ENCODE measurements at regions of chr20 and their contacts with region 1.

Region 1: DNA sequence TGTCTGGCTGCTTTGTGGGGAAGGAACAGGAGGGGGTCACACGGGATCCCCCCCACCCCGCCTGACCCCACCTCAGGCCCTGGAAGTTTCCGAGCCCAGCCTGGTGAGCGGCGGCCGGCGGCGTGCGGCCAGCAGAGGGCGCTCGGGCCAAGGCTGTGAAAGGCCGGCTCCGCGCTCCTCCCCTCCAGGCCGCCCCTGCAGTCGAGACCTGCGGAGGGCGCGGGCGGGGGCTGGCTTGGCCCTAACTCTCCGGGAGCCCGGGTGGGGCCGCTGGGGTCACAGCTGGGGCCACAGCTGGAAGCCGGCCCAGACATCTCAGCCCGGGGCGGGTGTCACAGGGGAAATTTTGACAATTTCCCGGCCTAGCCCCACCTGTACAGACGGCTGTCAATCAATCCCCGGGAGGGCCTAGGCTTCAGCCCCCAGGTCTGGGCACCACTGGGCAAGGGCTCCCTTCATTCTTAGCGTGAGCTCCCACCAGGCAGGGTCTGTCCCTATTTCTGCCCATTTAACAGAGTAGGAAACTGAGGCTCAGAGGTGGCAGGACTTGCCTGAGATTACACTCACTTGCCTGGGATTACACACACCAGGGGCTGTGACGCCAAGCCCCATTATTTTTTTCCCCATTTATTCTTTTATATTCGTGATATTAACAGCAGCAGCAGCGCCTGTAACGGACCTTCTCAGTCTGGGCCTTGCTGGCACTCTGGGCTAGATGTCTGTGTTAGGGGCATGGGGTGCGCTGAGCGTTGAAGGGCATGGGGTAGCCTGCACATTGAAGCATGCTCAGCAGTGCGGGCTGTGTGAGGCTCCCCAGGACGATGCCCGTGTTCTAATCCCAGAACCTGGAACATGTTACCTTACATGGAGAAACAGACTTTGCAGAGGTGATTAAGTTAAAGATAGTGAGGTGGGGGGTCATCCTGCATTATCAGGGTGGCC is 23.0 kb downstream of the ZBP1 start:
- DNase-seq: peak; percentile 59
- H3K4me3 Mint-ChIP-seq: no peak overlapping the region
- H3K27ac Mint-ChIP-seq: no peak overlapping the region
- H3K4me1 Mint-ChIP-seq: peaks cover 9% of the 10 kb centered on the region
- H3K27me3 Mint-ChIP-seq: peaks cover 33% of the 10 kb centered on the region

Region 2: DNA sequence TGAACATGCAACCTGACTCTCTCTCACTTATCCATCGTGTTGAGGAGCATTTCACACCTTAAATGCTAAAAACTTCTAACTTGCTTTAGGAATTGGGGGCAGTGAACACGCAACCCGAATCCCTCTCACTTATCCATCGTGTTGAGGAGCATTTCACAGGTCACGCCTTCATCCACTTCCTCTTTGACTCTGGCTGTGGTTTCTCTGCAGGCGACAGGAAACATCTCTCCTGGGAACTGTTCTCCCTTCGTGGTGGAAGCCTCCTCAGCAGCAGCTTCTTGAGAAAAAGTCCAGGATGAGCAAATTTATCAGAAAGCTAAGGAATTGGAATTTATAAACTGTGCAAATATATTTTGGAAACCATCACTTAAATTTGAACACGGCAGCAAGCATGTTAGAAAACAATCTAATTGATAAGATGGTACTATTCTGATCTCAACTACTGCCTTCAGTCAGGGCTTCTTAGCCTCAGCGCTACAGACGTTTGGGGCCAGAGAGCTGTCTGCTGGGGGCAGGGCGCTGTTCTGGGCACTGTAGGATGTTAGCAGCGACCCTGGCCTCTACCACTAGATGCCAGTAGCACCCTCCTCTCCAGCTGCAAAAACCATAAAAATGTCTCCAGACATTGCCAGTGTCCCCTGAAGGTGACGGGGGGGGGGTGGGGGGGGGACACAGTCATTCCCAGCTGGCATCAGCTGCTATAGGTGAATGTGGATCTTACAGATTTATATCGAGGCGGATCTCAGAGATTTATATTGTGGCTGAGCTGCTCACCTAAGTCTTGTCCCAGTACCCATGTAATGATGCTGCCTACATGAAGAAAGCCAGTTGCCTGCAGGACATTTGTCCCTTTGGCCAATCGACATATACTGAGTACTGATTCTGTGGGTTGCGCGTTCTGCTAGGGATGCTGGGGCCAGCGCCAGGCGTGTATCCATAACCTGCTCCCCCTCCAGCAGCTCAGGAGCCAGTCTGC is 98.6 kb before region 1 on chr20:
- intact Hi-C with region 1: loop called (anchors 1 kb)
- DNase-seq: no peak
- H3K4me3 Mint-ChIP-seq: no peak overlapping the region
- H3K27ac Mint-ChIP-seq: no peak overlapping the region
- H3K4me1 Mint-ChIP-seq: peaks cover 13% of the 10 kb centered on the region
- H3K27me3 Mint-ChIP-seq: peaks cover 39% of the 10 kb centered on the region

Region 3: DNA sequence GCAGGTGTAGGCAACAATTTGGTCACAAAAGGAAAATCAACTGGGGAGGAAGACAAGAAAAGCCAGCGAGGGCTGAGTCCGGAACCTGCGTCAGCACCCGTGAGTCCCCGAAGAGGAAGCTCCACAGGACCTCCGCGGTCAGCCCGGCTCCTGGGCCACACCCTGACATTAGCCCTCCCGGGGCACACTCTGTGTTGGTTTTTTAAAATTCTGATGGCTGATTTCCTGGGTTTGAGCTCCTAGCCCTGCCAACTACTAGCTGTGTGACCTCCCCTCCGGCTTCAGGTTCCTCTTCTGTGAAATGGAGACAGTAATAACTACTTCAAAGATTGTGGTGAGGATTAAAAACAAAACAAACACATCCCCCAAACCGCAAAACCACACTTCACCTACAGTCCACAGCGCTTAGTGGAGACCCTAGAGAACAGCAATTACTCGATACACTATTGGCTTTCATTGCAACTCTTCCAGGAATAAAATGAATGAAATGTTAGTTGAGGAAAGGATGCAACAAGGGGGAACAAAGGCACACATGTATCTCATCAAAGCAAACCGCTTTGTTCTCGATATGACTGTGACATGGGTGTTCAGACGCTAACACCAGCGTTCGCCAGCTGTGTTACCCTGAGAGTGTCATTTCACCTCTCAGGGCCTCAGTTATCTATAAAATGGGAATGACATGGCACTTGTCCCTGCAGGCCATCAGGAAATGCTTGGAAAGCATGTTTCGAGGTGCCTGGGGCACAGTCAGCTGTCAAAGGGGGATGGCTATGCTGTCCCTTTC is 22.0 kb after region 1 on chr20:
- intact Hi-C with region 1: no loop called
- DNase-seq: peak; percentile 71
- H3K4me3 Mint-ChIP-seq: peak overlapping the region; percentile 72
- H3K27ac Mint-ChIP-seq: peak overlapping the region; percentile 86
- H3K4me1 Mint-ChIP-seq: peaks cover 51% of the 10 kb centered on the region
- H3K27me3 Mint-ChIP-seq: peaks cover 17% of the 10 kb centered on the region

Region 4: DNA sequence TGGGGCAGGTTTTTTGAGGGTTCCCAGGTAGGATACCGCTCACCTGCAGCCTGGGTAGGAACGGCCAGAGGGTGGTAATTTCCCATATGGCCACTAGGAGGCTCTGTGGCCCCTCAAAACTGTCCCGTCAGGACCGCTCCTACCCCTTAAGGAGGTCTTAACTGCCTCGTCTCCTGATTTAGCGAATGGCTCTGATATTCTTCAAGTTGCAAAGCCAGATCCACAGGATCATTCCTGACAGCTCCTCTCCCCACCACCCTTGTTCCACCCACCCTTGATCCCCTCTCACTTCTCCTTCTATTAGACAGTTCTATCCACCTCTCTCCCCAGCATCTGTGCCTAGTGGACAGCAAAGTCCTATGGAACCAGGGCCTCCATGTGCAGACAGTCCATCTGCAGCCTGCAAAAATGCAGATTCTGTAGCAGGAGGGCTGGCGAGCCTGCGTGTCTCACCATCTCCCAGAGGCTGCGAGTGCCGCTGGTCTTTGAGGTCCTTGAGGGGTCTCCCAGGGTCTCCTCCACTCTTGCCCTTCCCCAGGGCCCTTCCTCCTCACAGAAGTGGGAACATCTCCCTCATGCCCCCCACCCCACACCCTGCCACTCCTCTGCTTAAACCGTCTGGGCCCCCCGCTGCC is 57.2 kb after region 1 on chr20:
- intact Hi-C with region 1: loop called (anchors 1 kb)
- DNase-seq: peak; percentile 23
- H3K4me3 Mint-ChIP-seq: no peak overlapping the region
- H3K27ac Mint-ChIP-seq: no peak overlapping the region
- H3K4me1 Mint-ChIP-seq: peaks cover 8% of the 10 kb centered on the region
- H3K27me3 Mint-ChIP-seq: peaks cover 2% of the 10 kb centered on the region

Region 5: DNA sequence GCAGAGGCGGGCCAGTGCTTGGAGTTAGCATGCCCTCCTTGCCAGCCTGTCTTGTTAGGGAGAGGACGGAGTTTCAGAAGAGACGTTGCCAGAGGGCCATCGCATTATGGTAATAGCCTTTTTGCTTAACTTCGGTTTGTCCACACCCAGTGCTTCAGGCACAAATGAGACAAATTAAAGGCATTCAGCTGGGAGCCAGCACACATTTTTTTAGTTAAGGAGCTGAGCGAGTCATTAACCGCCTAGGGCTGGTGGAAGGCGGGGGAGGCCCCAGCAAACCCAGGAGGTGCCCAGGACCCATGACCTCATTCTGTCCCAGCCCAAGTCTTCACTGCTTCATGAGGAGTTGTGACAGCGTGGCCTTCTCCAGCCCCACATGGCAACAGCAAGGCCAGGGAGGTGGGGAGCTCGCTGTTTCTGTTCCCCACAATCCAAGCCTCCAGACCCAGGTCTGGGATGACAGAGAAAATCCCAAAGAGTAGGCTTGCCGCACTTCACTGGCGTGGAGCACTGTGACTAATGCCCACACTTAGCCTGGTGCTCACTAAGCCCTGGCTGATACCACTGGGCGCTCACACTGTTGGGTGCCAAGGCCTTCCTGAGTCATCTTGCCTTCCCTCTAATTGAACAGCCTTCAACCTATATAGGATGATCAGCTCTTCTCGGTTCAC is 394.1 kb after region 1 on chr20:
- intact Hi-C with region 1: no loop called
- DNase-seq: no peak
- H3K4me3 Mint-ChIP-seq: no peak overlapping the region
- H3K27ac Mint-ChIP-seq: no peak overlapping the region
- H3K4me1 Mint-ChIP-seq: no peaks in the 10 kb centered on the region
- H3K27me3 Mint-ChIP-seq: peaks cover 3% of the 10 kb centered on the region

Region 6: DNA sequence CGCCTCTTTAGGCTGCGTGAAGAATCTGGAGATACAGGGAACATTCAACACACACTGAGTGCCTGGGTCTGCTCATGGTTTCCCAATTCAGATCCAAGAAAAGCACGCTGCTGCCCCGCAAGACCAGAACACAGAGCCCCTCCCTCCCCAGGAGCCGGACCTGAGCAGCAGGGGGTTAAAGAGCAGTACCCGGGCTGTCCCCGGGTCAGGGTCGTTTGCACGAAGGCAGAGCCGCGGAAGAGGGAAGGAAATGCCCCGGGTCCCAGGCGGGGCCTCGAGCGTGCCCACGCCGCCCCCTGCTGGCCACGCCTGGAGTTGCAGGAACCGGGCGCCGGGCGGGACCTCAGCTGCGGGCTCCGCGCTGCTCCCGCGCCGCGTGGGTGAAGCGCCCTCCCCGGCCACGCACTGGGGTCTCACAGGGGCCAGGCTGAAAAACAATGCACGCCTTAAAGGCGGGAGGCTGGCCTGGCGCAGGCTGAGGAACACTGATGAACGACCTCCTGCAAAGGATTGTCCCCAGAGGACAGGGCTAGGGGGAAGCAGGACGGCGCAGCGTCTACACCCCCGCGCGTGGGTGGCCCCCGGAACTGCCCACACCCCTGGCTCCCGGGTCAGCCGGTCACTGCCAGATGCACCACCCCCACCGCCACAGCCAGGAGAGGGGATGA is 582.3 kb after region 1 on chr20:
- intact Hi-C with region 1: loop called (anchors 1 kb)
- DNase-seq: peak; percentile 57
- H3K4me3 Mint-ChIP-seq: peak overlapping the region; percentile 51
- H3K27ac Mint-ChIP-seq: no peak overlapping the region
- H3K4me1 Mint-ChIP-seq: peaks cover 5% of the 10 kb centered on the region
- H3K27me3 Mint-ChIP-seq: peaks cover 6% of the 10 kb centered on the region